Activated CD4-positive, alpha-beta T cell treated with anti-CD3 and anti-CD28 coated beads for 36 hours (primary cell): ENCODE measurements at regions of chr4 and their contacts with region 1.

Region 1: DNA sequence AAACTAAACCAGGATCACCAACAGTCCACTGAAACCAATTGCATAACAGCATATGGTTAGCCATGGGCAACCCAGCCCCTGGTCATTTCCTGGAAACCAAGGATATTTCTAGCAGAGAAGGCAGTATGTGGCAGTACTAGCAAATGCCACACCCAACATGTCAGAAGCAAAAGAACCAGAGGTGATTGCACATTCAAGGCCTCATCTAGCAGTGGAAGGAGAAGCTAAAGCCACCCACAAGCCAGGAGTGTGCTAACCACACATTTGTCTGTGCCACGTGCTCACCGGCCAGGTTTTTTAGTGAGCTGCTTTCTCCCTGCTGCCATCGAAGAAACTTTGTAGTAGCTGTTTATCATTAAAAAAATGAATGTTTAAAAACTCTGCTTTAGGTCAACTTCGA is 42.0 kb downstream of the TEC start:
- DNase-seq: no peak
- ATAC-seq: no peak
- H3K4me3 Mint-ChIP-seq: no peak overlapping the region
- H3K27ac Mint-ChIP-seq: no peak overlapping the region
- H3K4me1 Mint-ChIP-seq: peaks cover 4% of the 10 kb centered on the region
- H3K27me3 Mint-ChIP-seq: no peaks in the 10 kb centered on the region

Region 2: GRCh38 chr4:48103483-48104139 is 124.0 kb before region 1 on chr4:
- CTCF ChIA-PET with region 1: no interaction called
- POLR2A ChIA-PET with region 1: no interaction called
- intact Hi-C with region 1: no loop called
- DNase-seq: peak; percentile 44
- ATAC-seq: peak; percentile 92
- H3K4me3 Mint-ChIP-seq: no peak overlapping the region
- H3K27ac Mint-ChIP-seq: peak overlapping the region; percentile 89
- H3K4me1 Mint-ChIP-seq: peaks cover 38% of the 10 kb centered on the region
- H3K27me3 Mint-ChIP-seq: no peaks in the 10 kb centered on the region

Region 3: DNA sequence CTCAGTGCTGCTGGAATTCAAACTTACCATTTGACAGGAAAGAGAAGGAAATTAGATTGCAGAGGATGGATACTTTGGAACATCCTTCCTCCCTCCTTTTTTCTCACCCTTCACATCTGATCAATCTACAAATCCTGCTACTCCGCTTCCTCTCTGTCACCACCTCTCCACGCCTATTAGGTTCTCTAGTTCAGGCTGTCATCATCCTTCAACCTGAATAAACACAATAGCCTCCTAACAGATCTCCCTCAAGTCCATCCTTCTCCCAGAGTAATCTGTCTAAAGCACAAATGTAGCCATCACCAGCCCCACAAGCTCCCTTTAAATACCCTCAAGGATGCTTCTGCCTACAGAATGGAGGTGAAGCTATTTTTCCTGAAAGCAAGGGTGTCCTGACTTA is 93.7 kb after region 1 on chr4:
- CTCF ChIA-PET with region 1: no interaction called
- POLR2A ChIA-PET with region 1: no interaction called
- intact Hi-C with region 1: loop called in 1 of 2 experiments (anchors 5 kb)
- DNase-seq: no peak
- ATAC-seq: no peak
- H3K4me3 Mint-ChIP-seq: no peak overlapping the region
- H3K27ac Mint-ChIP-seq: no peak overlapping the region
- H3K4me1 Mint-ChIP-seq: no peaks in the 10 kb centered on the region
- H3K27me3 Mint-ChIP-seq: no peaks in the 10 kb centered on the region